CD8-positive, alpha-beta T cell (primary cell): ENCODE measurements at regions of chr15 and their contacts with region 1.

Region 1: DNA sequence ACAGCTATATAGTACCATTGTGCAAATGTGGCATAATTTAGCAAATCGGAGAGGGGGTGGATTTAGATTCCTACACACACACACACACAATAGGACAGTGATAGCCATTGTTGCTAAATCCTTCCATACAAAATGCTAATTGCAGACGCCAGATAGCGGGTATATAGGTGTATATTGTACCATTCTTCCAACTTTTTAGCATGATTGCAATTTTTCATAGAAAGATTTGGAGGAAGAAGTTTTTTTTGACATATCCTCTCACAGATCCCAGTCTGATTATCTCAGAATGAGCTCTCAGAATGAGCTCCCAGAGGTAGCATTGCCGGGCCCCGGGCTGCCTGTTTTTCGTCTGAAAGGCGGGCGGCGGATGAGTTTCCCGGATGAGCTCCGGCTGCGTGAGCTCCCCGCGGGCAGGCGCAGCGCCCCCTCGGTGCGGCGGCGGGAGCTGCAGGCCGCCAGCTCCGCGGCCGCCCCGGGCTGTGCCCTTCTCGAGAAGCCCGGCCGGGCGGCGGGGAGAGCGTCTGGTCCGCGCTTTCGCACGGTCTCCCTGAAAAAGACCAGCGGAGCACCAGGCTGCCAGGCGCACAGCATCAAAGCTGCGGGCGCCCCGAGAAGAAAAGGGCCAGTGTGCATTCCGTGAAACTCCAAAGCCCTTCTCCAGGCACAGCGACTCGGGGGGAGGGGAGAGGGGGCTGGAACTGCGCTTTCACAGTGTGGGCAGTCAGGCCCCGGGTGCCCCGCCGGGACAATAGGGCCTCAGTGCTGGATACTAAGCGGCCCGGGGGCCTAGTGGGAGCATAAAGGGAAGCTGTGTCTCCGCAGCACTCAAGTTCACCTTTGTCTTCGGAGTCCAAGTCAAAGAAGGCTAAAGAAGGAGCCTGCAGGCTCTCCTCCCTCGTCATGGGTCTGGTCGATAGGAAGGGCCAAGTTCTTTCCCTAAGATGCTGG is 12.0 kb upstream of the SHC4 start:
- DNase-seq: peak; percentile 42 to 82 (median 67)
- ATAC-seq: peak; percentile 98
- H3K4me3 ChIP-seq: peak overlapping the region; percentile 30 to 42
- H3K4me3 Mint-ChIP-seq: peak overlapping the region; percentile 63
- H3K27ac ChIP-seq: no peak overlapping the region
- H3K27ac Mint-ChIP-seq: no peak overlapping the region
- H3K4me1 ChIP-seq: peaks cover 8% of the 10 kb centered on the region
- H3K4me1 Mint-ChIP-seq: peaks cover 3% of the 10 kb centered on the region
- H3K27me3 ChIP-seq: peaks cover 0 to 8% of the 10 kb centered on the region in 2 experiments
- H3K27me3 Mint-ChIP-seq: peaks cover 19% of the 10 kb centered on the region
- CTCF ChIP-seq: peak; percentile 98

Region 2: GRCh38 chr15:48963524-48964113 is 12.1 kb before region 1 on chr15 and contains the start of gene SHC4:
- CTCF ChIA-PET with region 1: interaction called, 49 read pairs
- POLR2A ChIA-PET with region 1: interaction called, 3 read pairs
- intact Hi-C with region 1: no loop called
- DNase-seq: peak in 2 of 9 experiments; percentile 47 to 61
- ATAC-seq: peak; percentile 47
- H3K4me3 ChIP-seq: peak within 1 kb of the TSS; percentile 44 to 47
- H3K4me3 Mint-ChIP-seq: peak within 1 kb of the TSS; percentile 86
- H3K27ac ChIP-seq: no peak within 1 kb of the TSS
- H3K27ac Mint-ChIP-seq: no peak within 1 kb of the TSS
- H3K4me1 ChIP-seq: peaks cover 26% of the 10 kb centered on the region
- H3K4me1 Mint-ChIP-seq: peaks cover 29% of the 10 kb centered on the region
- H3K27me3 ChIP-seq: peaks cover 2 to 13% of the 10 kb centered on the region in 2 experiments
- H3K27me3 Mint-ChIP-seq: peaks cover 34% of the 10 kb centered on the region
- CTCF ChIP-seq: no peak
- total RNA-seq, gene SHC4: not detected

Region 3: GRCh38 chr15:48992545-48992944 is 16.8 kb after region 1 on chr15:
- CTCF ChIA-PET with region 1: interaction called, 11 read pairs
- POLR2A ChIA-PET with region 1: no interaction called
- intact Hi-C with region 1: no loop called
- DNase-seq: no peak
- ATAC-seq: no peak
- H3K4me3 ChIP-seq: no peak overlapping the region
- H3K4me3 Mint-ChIP-seq: no peak overlapping the region
- H3K27ac ChIP-seq: no peak overlapping the region
- H3K27ac Mint-ChIP-seq: no peak overlapping the region
- H3K4me1 ChIP-seq: no peaks in the 10 kb centered on the region
- H3K4me1 Mint-ChIP-seq: no peaks in the 10 kb centered on the region
- H3K27me3 ChIP-seq: no peaks in the 10 kb centered on the region
- H3K27me3 Mint-ChIP-seq: no peaks in the 10 kb centered on the region
- CTCF ChIP-seq: no peak